B cell (primary cell): ENCODE measurements at regions of chr1 and their contacts with region 1.

Region 1: DNA sequence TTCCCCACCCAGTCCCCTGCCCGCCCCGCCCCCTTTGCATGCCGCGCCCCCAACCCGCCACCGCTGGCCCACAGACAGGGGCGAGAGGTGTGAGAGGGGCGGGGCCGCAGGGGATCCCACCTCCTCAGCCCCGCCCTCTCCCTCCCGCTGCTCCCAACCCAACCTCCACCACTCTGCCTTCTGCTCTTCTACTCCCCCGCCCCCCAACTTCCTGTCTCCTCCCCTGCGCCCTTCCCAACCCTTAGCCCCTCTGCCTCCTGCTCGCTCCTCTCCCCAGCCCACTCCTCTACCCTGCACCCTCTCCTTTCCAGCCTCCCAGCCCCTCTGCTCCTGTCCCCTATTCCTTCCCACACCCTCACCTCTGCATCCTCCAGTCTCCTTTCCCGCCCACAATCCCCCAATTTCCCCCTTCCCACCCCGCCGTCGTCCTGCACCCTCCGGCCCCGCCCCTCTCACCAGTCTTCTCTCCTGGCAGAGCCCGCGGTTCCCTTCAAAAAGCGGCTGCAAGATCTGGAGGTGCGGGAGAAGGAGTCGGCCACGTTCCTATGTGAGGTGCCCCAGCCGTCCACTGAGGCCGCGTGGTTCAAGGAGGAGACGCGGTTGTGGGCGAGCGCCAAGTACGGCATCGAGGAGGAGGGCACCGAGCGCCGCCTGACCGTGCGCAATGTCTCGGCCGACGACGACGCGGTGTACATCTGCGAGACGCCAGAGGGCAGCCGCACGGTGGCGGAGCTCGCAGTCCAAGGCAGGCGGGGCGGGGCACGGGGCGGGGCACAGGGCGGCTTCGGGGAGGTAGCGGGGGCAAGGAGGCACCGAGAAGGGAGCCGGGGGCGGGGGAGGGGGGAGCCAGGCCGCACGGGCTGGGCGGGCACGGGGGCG is 5.4 kb downstream of the OBSCN start:
- DNase-seq: peak; percentile 91
- ATAC-seq: peak; percentile 93
- H3K4me3 ChIP-seq: peak overlapping the region; percentile 19 to 73 (median 57)
- H3K4me3 Mint-ChIP-seq: peak overlapping the region; percentile 97
- H3K27ac ChIP-seq: peak overlapping the region in 1 of 2 donors; percentile 41
- H3K27ac Mint-ChIP-seq: peak overlapping the region; percentile 75
- H3K4me1 ChIP-seq: peaks cover 0 to 8% of the 10 kb centered on the region in 2 donors
- H3K4me1 Mint-ChIP-seq: peaks cover 5% of the 10 kb centered on the region
- H3K27me3 ChIP-seq: peaks cover 0 to 2% (median 0%) of the 10 kb centered on the region in 4 experiments
- H3K27me3 Mint-ChIP-seq: no peaks in the 10 kb centered on the region
- CTCF ChIP-seq: peak; percentile 34

Region 2: DNA sequence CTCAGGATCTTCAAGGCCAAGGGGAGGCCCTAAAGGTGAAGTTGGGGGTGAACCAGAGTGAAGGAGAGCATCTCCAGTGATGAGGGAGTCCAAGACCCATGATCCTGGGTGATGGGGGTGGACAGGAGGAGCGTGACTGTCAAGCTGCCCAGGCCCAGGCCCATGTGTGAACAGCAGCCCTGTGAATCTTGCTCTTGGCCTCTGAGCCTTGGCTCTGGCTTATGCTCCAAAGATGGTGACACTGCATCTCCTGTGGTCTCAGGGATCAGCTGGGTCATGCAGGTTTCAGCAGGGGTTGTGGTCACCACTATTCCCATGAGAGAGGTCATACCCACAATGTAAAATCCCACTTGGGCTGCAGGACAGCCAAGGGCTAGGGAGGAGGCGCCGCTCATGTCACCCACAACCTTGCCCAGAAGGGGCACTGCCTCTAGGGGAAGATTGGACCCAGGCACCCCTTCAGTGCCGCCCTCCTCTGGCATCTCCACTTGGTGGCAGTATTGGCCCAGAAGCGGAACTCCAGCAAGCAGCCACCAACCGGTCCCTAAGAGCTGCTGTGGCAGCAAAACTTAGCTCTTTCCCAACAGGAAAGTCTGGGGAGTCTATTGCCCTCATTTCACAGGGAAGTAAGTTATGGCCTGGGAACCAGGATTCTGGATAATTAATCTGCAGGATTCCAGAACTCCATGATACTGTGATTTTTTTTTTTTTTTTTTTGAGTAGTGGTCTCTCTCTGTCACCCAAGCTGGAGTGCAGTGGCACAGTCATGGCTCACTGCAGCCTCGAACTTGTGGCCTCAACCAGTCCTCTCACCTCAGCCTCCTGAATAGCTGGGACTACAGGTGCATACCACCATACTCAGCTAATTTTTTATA is 213.9 kb before region 1 on chr1:
- CTCF ChIA-PET with region 1: no interaction called
- POLR2A ChIA-PET with region 1: no interaction called
- intact Hi-C with region 1: no loop called
- DNase-seq: peak; percentile 71
- ATAC-seq: peak; percentile 82
- H3K4me3 ChIP-seq: no peak overlapping the region
- H3K4me3 Mint-ChIP-seq: no peak overlapping the region
- H3K27ac ChIP-seq: no peak overlapping the region
- H3K27ac Mint-ChIP-seq: no peak overlapping the region
- H3K4me1 ChIP-seq: no peaks in the 10 kb centered on the region
- H3K4me1 Mint-ChIP-seq: no peaks in the 10 kb centered on the region
- H3K27me3 ChIP-seq: peaks cover 0 to 20% (median 10%) of the 10 kb centered on the region in 4 experiments
- H3K27me3 Mint-ChIP-seq: peaks cover 29% of the 10 kb centered on the region
- CTCF ChIP-seq: peak; percentile 72

Region 3: GRCh38 chr1:228109073-228109961 is 103.9 kb before region 1 on chr1 and contains the start of gene MRPL55:
- CTCF ChIA-PET with region 1: no interaction called
- POLR2A ChIA-PET with region 1: no interaction called
- intact Hi-C with region 1: loop called (anchors 1 kb)
- DNase-seq: peak; percentile 98
- ATAC-seq: peak; percentile 99
- H3K4me3 ChIP-seq: peak within 1 kb of the TSS; percentile 60 to 97 (median 95)
- H3K4me3 Mint-ChIP-seq: peak within 1 kb of the TSS; percentile 92
- H3K27ac ChIP-seq: peak within 1 kb of the TSS; percentile 95
- H3K27ac Mint-ChIP-seq: peak within 1 kb of the TSS; percentile 87
- H3K4me1 ChIP-seq: peaks cover 17 to 26% of the 10 kb centered on the region in 2 donors
- H3K4me1 Mint-ChIP-seq: peaks cover 25% of the 10 kb centered on the region
- H3K27me3 ChIP-seq: no peaks in the 10 kb centered on the region
- H3K27me3 Mint-ChIP-seq: no peaks in the 10 kb centered on the region
- CTCF ChIP-seq: no peak
- total RNA-seq, gene MRPL55: 38.9 and 42.4 TPM in 2 replicates

Region 4: GRCh38 chr1:228139944-228140656 is 73.1 kb before region 1 on chr1 and contains the start of gene GUK1:
- CTCF ChIA-PET with region 1: no interaction called
- POLR2A ChIA-PET with region 1: interaction called, 4 read pairs
- intact Hi-C with region 1: loop called (anchors 1 kb)
- DNase-seq: peak; percentile 100
- ATAC-seq: peak; percentile 91
- H3K4me3 ChIP-seq: peak within 1 kb of the TSS; percentile 70 to 87 (median 82)
- H3K4me3 Mint-ChIP-seq: peak within 1 kb of the TSS; percentile 96
- H3K27ac ChIP-seq: peak within 1 kb of the TSS; percentile 95 to 98
- H3K27ac Mint-ChIP-seq: peak within 1 kb of the TSS; percentile 100
- H3K4me1 ChIP-seq: peaks cover 55 to 74% of the 10 kb centered on the region in 2 donors
- H3K4me1 Mint-ChIP-seq: peaks cover 68% of the 10 kb centered on the region
- H3K27me3 ChIP-seq: no peaks in the 10 kb centered on the region
- H3K27me3 Mint-ChIP-seq: no peaks in the 10 kb centered on the region
- CTCF ChIP-seq: no peak
- total RNA-seq, gene GUK1: 123 and 125 TPM in 2 replicates

Region 5: GRCh38 chr1:228174482-228175375 is 38.5 kb before region 1 on chr1:
- CTCF ChIA-PET with region 1: no interaction called
- POLR2A ChIA-PET with region 1: no interaction called
- intact Hi-C with region 1: loop called (anchors 1 kb)
- DNase-seq: peak; percentile 69
- ATAC-seq: peak; percentile 65
- H3K4me3 ChIP-seq: no peak overlapping the region
- H3K4me3 Mint-ChIP-seq: no peak overlapping the region
- H3K27ac ChIP-seq: no peak overlapping the region
- H3K27ac Mint-ChIP-seq: peak overlapping the region; percentile 20
- H3K4me1 ChIP-seq: no peaks in the 10 kb centered on the region
- H3K4me1 Mint-ChIP-seq: peaks cover 6% of the 10 kb centered on the region
- H3K27me3 ChIP-seq: no peaks in the 10 kb centered on the region
- H3K27me3 Mint-ChIP-seq: no peaks in the 10 kb centered on the region
- CTCF ChIP-seq: no peak

Region 6: DNA sequence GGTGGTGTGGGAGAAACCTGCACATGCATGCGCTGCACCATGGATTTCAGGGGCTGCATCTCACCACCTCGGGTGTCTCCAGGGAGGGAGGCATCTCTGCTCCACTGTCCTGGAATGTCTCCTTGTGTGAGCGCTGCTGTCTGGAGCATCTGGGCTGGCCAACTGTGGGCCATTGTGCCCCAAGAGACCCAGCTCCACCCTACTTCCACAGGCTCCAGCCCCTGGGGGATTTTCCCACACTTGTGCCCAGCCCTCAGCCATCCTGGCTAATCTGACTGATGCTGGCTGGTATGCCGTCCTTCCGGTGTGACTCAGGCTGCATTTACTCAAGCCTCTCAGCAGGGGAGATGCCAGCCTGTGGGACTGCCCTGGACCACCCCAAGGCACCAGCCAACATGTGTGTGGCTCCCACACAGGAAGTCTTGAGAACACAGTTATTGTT is 131.4 kb after region 1 on chr1:
- CTCF ChIA-PET with region 1: no interaction called
- POLR2A ChIA-PET with region 1: no interaction called
- intact Hi-C with region 1: no loop called
- DNase-seq: no peak
- ATAC-seq: no peak
- H3K4me3 ChIP-seq: no peak overlapping the region
- H3K4me3 Mint-ChIP-seq: no peak overlapping the region
- H3K27ac ChIP-seq: no peak overlapping the region
- H3K27ac Mint-ChIP-seq: no peak overlapping the region
- H3K4me1 ChIP-seq: no peaks in the 10 kb centered on the region
- H3K4me1 Mint-ChIP-seq: no peaks in the 10 kb centered on the region
- H3K27me3 ChIP-seq: no peaks in the 10 kb centered on the region
- H3K27me3 Mint-ChIP-seq: no peaks in the 10 kb centered on the region
- CTCF ChIP-seq: no peak

Region 7: GRCh38 chr1:228500901-228501871 is 288.0 kb after region 1 on chr1:
- CTCF ChIA-PET with region 1: no interaction called
- POLR2A ChIA-PET with region 1: no interaction called
- intact Hi-C with region 1: loop called (anchors 5 kb)
- DNase-seq: peak; percentile 90
- ATAC-seq: peak; percentile 94
- H3K4me3 ChIP-seq: peak overlapping the region in 4 of 5 experiments; percentile 26 to 51 (median 47)
- H3K4me3 Mint-ChIP-seq: peak overlapping the region; percentile 83
- H3K27ac ChIP-seq: peak overlapping the region; percentile 51 to 54
- H3K27ac Mint-ChIP-seq: peak overlapping the region; percentile 86
- H3K4me1 ChIP-seq: peaks cover 20% of the 10 kb centered on the region in 2 donors
- H3K4me1 Mint-ChIP-seq: peaks cover 20% of the 10 kb centered on the region
- H3K27me3 ChIP-seq: peaks cover 0 to 3% (median 0%) of the 10 kb centered on the region in 4 experiments
- H3K27me3 Mint-ChIP-seq: peaks cover 6% of the 10 kb centered on the region
- CTCF ChIP-seq: peak; percentile 91